Activated naive CD4-positive, alpha-beta T cell treated with anti-CD3 and anti-CD28 coated beads, Interleukin-2, amount 10 ng/mL, durations not matched to agents 7 days and 5 days (primary cell): ENCODE measurements at regions of chr16 and their contacts with region 1.

Region 1: DNA sequence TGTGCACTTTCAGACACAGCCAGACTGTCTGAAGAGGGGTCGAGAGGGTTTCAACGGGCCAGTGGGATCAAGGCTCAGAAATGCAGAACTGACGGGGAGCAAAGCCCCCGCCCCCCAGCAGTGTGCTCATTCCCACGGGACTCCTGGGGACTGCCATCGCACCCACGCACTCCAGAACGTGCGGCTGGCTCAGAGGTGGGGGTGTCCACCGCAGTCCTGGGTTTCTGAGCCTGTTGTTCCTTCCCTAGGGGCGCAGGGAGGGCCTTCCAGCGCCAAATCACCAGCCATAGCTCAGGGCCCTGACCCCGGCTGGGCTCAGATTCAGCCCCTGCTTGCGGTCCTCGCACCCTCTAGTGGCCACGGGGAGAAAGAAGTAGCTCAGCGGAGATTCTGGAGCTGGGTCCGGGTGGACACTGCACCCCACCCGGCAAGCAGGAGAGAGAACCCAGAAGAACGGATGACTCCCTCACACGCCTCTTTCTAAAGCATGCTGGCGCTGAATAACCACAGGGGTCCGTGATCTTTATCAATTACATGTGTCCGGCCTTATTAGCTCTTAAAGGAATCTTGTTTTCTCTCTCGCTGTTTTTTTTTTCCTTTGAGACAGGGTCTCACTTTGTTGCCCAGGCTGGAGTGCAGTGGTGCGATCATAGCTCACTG is 45.0 kb upstream of the USP7 start:
- DNase-seq: peak; percentile 77
- H3K4me3 Mint-ChIP-seq: no peak overlapping the region
- H3K27ac Mint-ChIP-seq: no peak overlapping the region
- H3K4me1 Mint-ChIP-seq: peaks cover 3% of the 10 kb centered on the region
- H3K27me3 Mint-ChIP-seq: peaks cover 45% of the 10 kb centered on the region

Region 2: GRCh38 chr16:8776129-8776584 is 232.6 kb before region 1 on chr16:
- CTCF ChIA-PET with region 1: no interaction called
- DNase-seq: no peak
- H3K4me3 Mint-ChIP-seq: no peak overlapping the region
- H3K27ac Mint-ChIP-seq: no peak overlapping the region
- H3K4me1 Mint-ChIP-seq: no peaks in the 10 kb centered on the region
- H3K27me3 Mint-ChIP-seq: no peaks in the 10 kb centered on the region

Region 3: GRCh38 chr16:8899709-8900317 is 108.9 kb before region 1 on chr16:
- CTCF ChIA-PET with region 1: interaction called, 13 read pairs
- DNase-seq: no peak
- H3K4me3 Mint-ChIP-seq: no peak overlapping the region
- H3K27ac Mint-ChIP-seq: no peak overlapping the region
- H3K4me1 Mint-ChIP-seq: no peaks in the 10 kb centered on the region
- H3K27me3 Mint-ChIP-seq: no peaks in the 10 kb centered on the region